ENCODE measurements at regions of chr10 and their contacts with region 1.

Region 1: GRCh38 chr10:4849555-4850242 is 23.7 kb downstream of the AKR1E2 start:
- DNase-seq: peak; percentile 94
- H3K4me3 ChIP-seq: no peak overlapping the region
- H3K27ac ChIP-seq: no peak overlapping the region
- H3K4me1 ChIP-seq: no peaks in the 10 kb centered on the region
- H3K27me3 ChIP-seq: no peaks in the 10 kb centered on the region
- CTCF ChIP-seq: peak; percentile 99

Region 2: DNA sequence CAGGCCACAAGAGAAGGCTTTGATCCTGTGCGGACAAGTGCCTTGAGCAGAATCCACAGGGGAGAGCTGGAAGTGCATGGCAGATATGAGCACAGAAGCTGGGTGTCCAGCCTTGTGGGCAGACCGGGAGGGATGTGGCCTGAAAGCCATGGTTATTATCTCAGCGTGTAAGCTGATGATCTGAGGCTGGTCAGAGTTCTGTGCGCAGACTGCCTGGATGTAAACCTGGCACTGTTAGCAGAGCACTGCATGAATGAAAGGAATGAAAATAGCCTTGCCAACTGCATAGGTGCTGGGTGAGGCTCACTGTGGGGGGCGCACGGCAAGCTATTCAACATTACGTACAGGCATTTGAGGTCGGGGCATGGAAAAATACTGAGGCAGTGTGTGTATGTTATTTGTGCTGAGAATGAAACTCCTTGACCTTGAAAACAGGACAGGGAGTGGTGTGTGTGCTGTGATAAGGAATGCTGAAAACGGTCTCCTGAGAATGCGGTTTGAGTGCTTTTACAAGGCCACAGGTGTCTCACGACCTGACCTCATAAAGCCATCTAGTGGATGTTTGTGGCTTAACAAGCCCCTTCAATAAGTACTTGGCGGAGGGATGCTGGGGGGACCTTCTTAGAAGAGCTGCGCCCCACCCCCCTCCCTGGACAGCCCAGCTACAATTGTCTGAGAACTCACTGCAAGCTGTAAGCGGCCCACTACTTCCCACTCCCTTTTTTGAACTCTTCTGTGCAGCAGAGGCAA is 132.2 kb after region 1 on chr10:
- intact Hi-C with region 1: loop called (anchors 5 kb)
- DNase-seq: peak; percentile 66
- H3K4me3 ChIP-seq: no peak overlapping the region
- H3K27ac ChIP-seq: peak overlapping the region; percentile 14
- H3K4me1 ChIP-seq: no peaks in the 10 kb centered on the region
- H3K27me3 ChIP-seq: no peaks in the 10 kb centered on the region
- CTCF ChIP-seq: no peak

Region 3: GRCh38 chr10:5079306-5079830 is 229.7 kb after region 1 on chr10:
- intact Hi-C with region 1: no loop called
- DNase-seq: no peak
- H3K4me3 ChIP-seq: no peak overlapping the region
- H3K27ac ChIP-seq: no peak overlapping the region
- H3K4me1 ChIP-seq: no peaks in the 10 kb centered on the region
- H3K27me3 ChIP-seq: no peaks in the 10 kb centered on the region
- CTCF ChIP-seq: no peak

Region 4: GRCh38 chr10:5094265-5095205 is 244.8 kb after region 1 on chr10 and contains the start of gene AKR1C3:
- intact Hi-C with region 1: loop called (anchors 5 kb)
- DNase-seq: peak; percentile 30
- H3K4me3 ChIP-seq: peak within 1 kb of the TSS; percentile 49
- H3K27ac ChIP-seq: peak within 1 kb of the TSS; percentile 71
- H3K4me1 ChIP-seq: no peaks in the 10 kb centered on the region
- H3K27me3 ChIP-seq: no peaks in the 10 kb centered on the region
- CTCF ChIP-seq: peak; percentile 48
- total RNA-seq, gene AKR1C3: 75.6 to 257 TPM

Region 5: DNA sequence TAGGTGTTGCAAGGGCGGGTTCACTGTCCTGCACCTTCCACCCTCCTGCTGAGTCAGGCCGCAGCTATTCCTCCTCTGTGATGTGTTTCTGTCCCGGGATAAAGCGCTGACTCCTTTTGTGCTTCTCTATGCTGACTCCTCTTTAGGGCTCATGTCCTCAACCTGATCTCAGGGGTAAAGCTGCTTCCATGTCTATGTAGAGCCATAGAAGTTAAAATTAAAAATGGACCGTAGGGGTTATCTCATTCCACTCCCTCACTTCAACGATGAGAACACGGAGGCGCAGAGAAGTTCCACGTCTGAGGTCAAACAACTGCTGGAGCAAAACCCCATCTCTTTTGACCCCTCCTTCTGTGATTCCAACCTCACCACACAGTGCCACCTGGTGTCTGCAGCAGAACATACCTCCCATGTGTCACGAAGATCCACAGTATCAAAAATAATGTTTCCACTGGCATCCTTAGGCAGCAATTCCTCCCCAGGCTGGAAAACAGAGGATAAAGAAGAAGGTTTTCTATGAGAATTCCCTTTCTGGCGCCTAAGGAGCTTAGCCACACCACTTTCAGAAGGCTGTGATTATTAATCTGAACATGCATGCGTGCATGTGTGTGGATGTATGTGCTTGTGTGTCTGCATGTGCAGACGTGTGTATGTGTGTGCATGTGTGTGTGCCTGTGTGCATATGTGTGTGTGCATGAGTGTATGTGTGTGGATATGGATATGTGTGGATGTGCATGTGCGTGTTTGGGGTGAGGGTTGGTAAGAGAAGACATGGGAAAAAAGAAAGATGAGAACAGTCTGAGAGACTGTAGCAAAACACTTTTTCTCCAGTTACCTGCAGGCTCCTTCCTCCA is 433.8 kb after region 1 on chr10:
- intact Hi-C with region 1: loop called (anchors 2 kb)
- DNase-seq: peak; percentile 72
- H3K4me3 ChIP-seq: no peak overlapping the region
- H3K27ac ChIP-seq: no peak overlapping the region
- H3K4me1 ChIP-seq: no peaks in the 10 kb centered on the region
- H3K27me3 ChIP-seq: no peaks in the 10 kb centered on the region
- CTCF ChIP-seq: peak; percentile 76

Region 6: DNA sequence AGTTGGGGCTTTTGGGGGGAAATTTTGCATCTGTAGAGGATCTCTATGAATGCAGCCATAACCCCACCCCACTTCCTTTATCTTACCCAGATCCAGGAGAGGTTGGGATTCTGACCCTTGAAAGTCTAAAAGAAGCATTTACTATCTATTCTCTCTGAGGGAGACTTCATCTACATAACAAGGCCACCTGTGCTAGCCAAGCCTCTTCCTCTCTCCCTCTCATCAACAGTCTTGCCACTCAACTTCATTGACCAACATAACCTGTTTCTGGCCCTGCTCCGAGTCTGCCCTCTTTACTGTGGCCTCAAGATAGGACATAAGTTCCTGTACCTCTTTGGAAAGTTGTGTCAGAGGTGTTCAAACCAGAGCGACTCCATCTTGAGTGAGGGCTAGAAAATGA is 535.5 kb after region 1 on chr10:
- intact Hi-C with region 1: loop called (anchors 10 kb)
- DNase-seq: no peak
- H3K4me3 ChIP-seq: no peak overlapping the region
- H3K27ac ChIP-seq: no peak overlapping the region
- H3K4me1 ChIP-seq: no peaks in the 10 kb centered on the region
- H3K27me3 ChIP-seq: no peaks in the 10 kb centered on the region
- CTCF ChIP-seq: no peak

Region 7: DNA sequence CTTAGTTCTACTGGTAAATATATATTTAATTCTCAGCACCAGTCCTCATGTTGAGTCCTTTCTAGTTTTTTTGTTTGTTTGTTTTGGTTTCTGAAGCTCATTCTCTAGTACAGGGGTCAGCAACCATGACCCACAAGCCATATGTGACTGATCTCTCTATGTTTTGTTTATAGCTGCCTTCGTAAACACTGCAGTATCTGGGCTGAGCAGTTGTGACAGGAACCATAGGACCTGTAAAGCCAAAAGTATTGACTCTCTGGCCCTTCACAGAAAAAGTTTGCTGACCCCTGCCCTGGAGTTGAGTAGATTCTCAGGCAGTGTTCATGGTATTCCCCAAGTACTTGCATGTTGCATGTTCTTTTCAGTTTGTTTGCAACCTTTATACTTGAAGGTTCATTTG is 583.5 kb after region 1 on chr10:
- intact Hi-C with region 1: loop called (anchors 2 kb)
- DNase-seq: no peak
- H3K4me3 ChIP-seq: no peak overlapping the region
- H3K27ac ChIP-seq: no peak overlapping the region
- H3K4me1 ChIP-seq: no peaks in the 10 kb centered on the region
- H3K27me3 ChIP-seq: no peaks in the 10 kb centered on the region
- CTCF ChIP-seq: no peak

Region 8: DNA sequence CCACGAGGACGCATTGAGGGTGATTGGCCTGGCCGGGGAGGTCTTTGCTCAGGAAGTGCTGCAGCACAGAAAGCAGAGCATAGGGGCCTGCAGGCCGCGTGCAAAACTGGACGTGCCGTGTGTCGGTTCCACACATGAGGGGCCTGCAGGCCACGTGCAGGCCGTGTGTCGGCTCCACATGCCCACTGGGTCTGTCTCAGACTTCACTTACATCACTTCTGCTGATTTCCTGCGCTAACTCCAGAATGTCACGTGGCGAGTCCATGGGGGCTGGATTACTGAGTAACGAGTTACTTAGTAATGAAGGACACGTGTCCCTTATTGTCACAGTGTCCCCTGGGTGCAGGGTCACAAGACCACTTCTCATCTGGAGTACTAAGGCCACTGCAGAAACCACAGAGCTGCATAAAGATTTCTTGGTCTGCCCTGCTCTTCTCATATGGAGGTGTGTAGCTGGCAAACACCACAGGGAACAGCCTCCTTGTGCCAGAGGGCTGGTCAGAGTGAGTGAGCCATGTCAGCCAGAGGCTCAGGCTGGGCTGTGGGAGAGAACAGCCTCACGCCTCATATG is 902.7 kb after region 1 on chr10:
- intact Hi-C with region 1: no loop called
- DNase-seq: no peak
- H3K4me3 ChIP-seq: no peak overlapping the region
- H3K27ac ChIP-seq: no peak overlapping the region
- H3K4me1 ChIP-seq: no peaks in the 10 kb centered on the region
- H3K27me3 ChIP-seq: no peaks in the 10 kb centered on the region
- CTCF ChIP-seq: no peak

Measured in colonic mucosa (tissue), 4 donors.